CD8-positive, alpha-beta T cell (primary cell): ENCODE measurements at regions of chr10 and their contacts with region 1.

Region 1: DNA sequence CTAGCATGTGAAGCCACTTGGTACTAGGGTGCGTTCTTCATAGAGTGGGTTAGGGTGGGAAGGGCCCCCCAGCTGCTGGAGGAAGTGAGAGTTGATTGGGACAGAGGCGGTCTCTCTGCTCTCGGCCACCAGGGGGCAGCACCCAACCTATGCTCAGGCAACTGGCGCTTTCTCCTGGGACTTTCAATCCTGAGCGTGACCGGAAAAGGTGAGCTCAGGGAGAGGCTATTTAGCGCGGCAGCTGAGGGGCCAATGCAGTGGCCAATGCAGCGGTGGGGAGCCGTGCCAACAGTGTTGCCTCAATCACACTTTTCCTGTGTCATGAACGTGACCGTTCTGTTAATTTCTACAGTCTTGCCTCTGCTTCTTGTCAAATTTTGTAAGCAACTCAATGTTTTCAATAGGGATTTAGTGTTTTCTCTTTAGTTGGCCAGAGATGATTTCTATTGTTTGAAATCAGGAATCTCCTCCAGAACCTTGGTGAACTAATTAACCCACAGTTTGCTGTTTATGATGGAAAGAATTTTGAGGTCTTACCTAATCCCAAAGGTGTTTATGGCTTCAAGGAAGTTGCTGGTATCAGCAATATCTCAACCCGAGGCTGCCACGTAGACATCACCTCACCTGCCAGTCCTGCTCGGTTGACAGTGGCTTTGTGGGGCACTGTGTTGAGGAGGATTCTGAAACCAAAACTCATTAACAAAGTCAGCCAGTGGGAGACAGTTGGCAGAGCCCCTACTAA is 67.9 kb upstream of the PDZD8 start:
- DNase-seq: peak; percentile 12 to 64 (median 48)
- ATAC-seq: peak; percentile 40
- H3K4me3 ChIP-seq: no peak overlapping the region
- H3K4me3 Mint-ChIP-seq: no peak overlapping the region
- H3K27ac ChIP-seq: no peak overlapping the region
- H3K27ac Mint-ChIP-seq: no peak overlapping the region
- H3K4me1 ChIP-seq: no peaks in the 10 kb centered on the region
- H3K4me1 Mint-ChIP-seq: peaks cover 4% of the 10 kb centered on the region
- H3K27me3 ChIP-seq: no peaks in the 10 kb centered on the region
- H3K27me3 Mint-ChIP-seq: peaks cover 26% of the 10 kb centered on the region
- CTCF ChIP-seq: peak; percentile 73

Region 2: GRCh38 chr10:117241541-117242462 is 201.3 kb before region 1 on chr10:
- CTCF ChIA-PET with region 1: no interaction called
- POLR2A ChIA-PET with region 1: no interaction called
- intact Hi-C with region 1: no loop called
- DNase-seq: no peak
- ATAC-seq: no peak
- H3K4me3 ChIP-seq: no peak overlapping the region
- H3K4me3 Mint-ChIP-seq: peak overlapping the region; percentile 51
- H3K27ac ChIP-seq: no peak overlapping the region
- H3K27ac Mint-ChIP-seq: no peak overlapping the region
- H3K4me1 ChIP-seq: peaks cover under 1% of the 10 kb centered on the region
- H3K4me1 Mint-ChIP-seq: peaks cover 8% of the 10 kb centered on the region
- H3K27me3 ChIP-seq: no peaks in the 10 kb centered on the region
- H3K27me3 Mint-ChIP-seq: peaks cover 21% of the 10 kb centered on the region
- CTCF ChIP-seq: no peak

Region 3: GRCh38 chr10:117431160-117431559 is 12.0 kb before region 1 on chr10:
- CTCF ChIA-PET with region 1: interaction called, 12 read pairs
- POLR2A ChIA-PET with region 1: no interaction called
- intact Hi-C with region 1: no loop called
- DNase-seq: no peak
- ATAC-seq: no peak
- H3K4me3 ChIP-seq: no peak overlapping the region
- H3K4me3 Mint-ChIP-seq: no peak overlapping the region
- H3K27ac ChIP-seq: no peak overlapping the region
- H3K27ac Mint-ChIP-seq: no peak overlapping the region
- H3K4me1 ChIP-seq: no peaks in the 10 kb centered on the region
- H3K4me1 Mint-ChIP-seq: no peaks in the 10 kb centered on the region
- H3K27me3 ChIP-seq: no peaks in the 10 kb centered on the region
- H3K27me3 Mint-ChIP-seq: peaks cover 16% of the 10 kb centered on the region
- CTCF ChIP-seq: no peak

Region 4: DNA sequence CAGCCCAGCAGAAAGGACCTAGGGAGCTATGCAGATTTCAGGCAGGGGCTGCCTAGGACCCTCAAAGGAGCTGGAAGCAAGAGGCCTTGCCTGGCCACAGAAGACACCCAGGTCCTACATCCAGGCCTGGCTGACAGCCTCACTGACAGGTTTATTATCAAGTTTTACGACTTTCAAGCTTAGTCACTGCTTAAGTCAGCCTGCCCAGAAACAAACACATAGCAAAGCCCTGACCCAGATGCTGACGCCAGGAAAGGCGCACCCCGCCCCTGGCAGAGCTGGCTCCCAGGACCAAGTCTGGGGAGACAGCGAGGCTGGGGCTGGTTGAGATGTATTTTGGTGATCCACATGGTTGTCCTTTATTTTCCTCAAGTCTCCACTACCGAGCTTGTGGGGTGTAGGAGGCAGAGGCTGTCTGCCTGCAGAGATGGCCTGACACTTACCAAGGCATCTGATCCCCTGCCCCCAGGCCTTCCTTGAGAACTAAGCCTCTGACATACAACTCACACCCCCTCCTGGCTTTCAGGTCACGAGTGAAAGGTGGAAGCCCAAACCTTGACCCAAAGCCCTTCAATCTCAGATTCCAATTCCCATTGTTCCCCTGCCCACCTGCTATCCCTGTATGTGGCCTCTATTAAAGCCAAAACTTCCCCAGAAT is 18.8 kb after region 1 on chr10:
- CTCF ChIA-PET with region 1: interaction called, 15 read pairs
- POLR2A ChIA-PET with region 1: no interaction called
- intact Hi-C with region 1: no loop called
- DNase-seq: no peak
- ATAC-seq: no peak
- H3K4me3 ChIP-seq: no peak overlapping the region
- H3K4me3 Mint-ChIP-seq: no peak overlapping the region
- H3K27ac ChIP-seq: no peak overlapping the region
- H3K27ac Mint-ChIP-seq: no peak overlapping the region
- H3K4me1 ChIP-seq: no peaks in the 10 kb centered on the region
- H3K4me1 Mint-ChIP-seq: no peaks in the 10 kb centered on the region
- H3K27me3 ChIP-seq: no peaks in the 10 kb centered on the region
- H3K27me3 Mint-ChIP-seq: peaks cover 6% of the 10 kb centered on the region
- CTCF ChIP-seq: no peak

Region 5: DNA sequence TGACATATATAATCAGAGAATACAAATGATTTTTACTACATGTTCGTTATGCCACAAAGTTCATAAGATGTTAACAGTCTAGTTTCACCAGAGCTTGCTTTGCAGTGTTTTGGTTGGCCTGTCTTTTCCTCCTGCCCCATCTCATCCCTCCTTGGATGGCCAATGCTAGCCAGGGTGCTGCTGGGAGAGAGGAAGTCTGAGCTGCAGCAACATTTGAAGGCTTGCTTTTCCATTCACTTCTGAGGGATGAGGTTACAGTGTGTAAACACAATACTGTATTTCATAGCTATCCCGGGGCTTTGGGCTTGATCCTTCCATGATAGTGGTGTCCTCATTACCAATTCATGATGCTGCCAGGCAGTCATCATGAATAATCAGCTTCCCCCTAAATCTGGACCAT is 433.1 kb after region 1 on chr10:
- CTCF ChIA-PET with region 1: no interaction called
- POLR2A ChIA-PET with region 1: no interaction called
- intact Hi-C with region 1: no loop called
- DNase-seq: no peak
- ATAC-seq: no peak
- H3K4me3 ChIP-seq: no peak overlapping the region
- H3K4me3 Mint-ChIP-seq: no peak overlapping the region
- H3K27ac ChIP-seq: no peak overlapping the region
- H3K27ac Mint-ChIP-seq: no peak overlapping the region
- H3K4me1 ChIP-seq: no peaks in the 10 kb centered on the region
- H3K4me1 Mint-ChIP-seq: no peaks in the 10 kb centered on the region
- H3K27me3 ChIP-seq: no peaks in the 10 kb centered on the region
- H3K27me3 Mint-ChIP-seq: peaks cover 6% of the 10 kb centered on the region
- CTCF ChIP-seq: no peak